HEK293 (cell line): ENCODE measurements at regions of chr18 and their contacts with region 1.

Region 1: DNA sequence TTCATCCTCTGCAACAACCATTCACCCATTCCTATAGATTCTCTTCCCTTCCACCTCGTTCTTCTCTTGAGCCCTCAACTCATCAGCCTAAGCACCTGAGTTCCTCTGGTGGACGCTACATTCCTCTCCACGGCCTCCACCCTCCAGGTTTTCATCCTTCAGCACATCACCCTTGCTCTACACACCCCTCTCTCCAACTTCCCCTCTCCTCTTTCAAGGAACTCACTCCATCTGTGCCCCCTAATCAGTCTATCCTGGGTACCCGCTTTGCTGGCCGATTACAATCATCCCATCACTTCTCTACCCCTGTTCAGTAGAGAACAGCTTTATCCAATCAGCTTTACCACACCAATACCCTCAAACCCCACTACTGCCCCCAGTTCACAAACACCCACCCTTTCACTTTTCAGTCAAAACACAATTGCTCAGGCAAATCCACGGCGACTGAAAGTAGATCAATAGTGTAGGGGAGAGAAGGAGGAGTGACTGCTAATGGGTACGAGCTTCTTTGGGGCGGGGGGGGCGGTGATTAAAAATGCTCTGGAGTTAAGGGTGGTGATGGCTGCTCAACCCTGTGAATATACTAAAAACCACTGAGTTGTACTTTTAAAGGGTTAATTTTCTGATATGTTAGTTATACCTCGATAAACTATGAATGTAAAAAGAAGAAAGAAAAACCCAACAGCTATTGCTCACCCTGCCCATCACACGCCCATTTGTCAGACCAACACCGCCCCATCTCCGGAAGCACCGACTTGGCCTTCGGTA is 857 bp downstream of the DYM start:
- H3K4me3 ChIP-seq: peak overlapping the region; percentile 95
- H3K27ac ChIP-seq: peak overlapping the region; percentile 89
- H3K4me1 ChIP-seq: no peaks in the 10 kb centered on the region
- CTCF ChIP-seq: no peak

Region 2: GRCh38 chr18:48488388-48488850 is 971.2 kb before region 1 on chr18:
- CTCF ChIA-PET with region 1: no interaction called
- POLR2A ChIA-PET with region 1: interaction called, 10 read pairs
- H3K4me3 ChIP-seq: no peak overlapping the region
- H3K27ac ChIP-seq: no peak overlapping the region
- H3K4me1 ChIP-seq: peaks cover 12% of the 10 kb centered on the region
- CTCF ChIP-seq: no peak

Region 3: GRCh38 chr18:49332706-49333406 is 126.7 kb before region 1 on chr18:
- CTCF ChIA-PET with region 1: no interaction called
- POLR2A ChIA-PET with region 1: no interaction called
- H3K4me3 ChIP-seq: no peak overlapping the region
- H3K27ac ChIP-seq: no peak overlapping the region
- H3K4me1 ChIP-seq: no peaks in the 10 kb centered on the region
- CTCF ChIP-seq: no peak

Region 4: GRCh38 chr18:49447810-49448745 is 11.5 kb before region 1 on chr18:
- CTCF ChIA-PET with region 1: interaction called, 14 read pairs
- POLR2A ChIA-PET with region 1: no interaction called
- H3K4me3 ChIP-seq: no peak overlapping the region
- H3K27ac ChIP-seq: no peak overlapping the region
- H3K4me1 ChIP-seq: no peaks in the 10 kb centered on the region
- CTCF ChIP-seq: 0 out of 2 replicates have a peak, but pooled peaks have one; percentile 27

Region 5: GRCh38 chr18:49486953-49487710 is 27.5 kb after region 1 on chr18 and contains the start of gene C18orf32:
- CTCF ChIA-PET with region 1: interaction called, 4 read pairs
- POLR2A ChIA-PET with region 1: interaction called, 41 read pairs
- H3K4me3 ChIP-seq: peak within 1 kb of the TSS; percentile 70
- H3K27ac ChIP-seq: peak within 1 kb of the TSS; percentile 88
- H3K4me1 ChIP-seq: peaks cover 22% of the 10 kb centered on the region
- CTCF ChIP-seq: peak; percentile 64

Region 6: DNA sequence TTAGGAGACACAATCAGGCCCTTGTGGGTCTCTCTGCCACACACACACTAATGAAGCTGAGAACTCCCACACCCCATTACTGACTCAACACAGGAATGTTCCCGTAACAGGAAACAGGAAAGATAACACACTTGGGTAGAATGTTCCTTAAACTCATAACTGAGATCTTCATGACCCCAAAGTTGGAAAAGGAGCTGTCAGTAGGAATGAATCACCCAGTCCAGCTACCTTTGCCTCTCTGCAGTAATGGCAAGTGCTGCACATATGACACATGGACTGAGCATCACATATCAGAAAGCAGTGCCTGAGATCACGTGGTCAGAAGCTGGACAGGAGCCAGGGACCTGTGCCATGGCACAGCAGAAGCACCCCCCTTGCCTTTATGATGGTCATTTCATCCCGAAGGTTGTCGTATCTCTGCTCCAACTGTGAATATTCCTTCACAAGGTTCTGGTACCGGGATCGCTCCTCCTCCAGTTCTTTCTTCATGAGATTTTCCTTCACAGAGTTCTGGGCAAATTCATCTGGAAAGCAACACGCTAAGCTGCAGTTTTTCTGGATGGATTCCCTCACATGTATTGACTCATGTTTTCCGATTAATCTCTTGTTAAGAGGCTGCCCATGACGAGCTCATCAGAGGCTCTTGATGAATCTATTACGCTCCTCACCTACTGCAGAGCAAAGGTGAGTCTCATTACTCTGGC is 419.1 kb after region 1 on chr18:
- CTCF ChIA-PET with region 1: no interaction called
- POLR2A ChIA-PET with region 1: no interaction called
- H3K4me3 ChIP-seq: no peak overlapping the region
- H3K27ac ChIP-seq: no peak overlapping the region
- H3K4me1 ChIP-seq: no peaks in the 10 kb centered on the region
- CTCF ChIP-seq: no peak